Activated B cell treated with CpG ODN at 0.5 μM for 24 hours (primary cell): ENCODE measurements at regions of chr7 and their contacts with region 1.

Region 1: DNA sequence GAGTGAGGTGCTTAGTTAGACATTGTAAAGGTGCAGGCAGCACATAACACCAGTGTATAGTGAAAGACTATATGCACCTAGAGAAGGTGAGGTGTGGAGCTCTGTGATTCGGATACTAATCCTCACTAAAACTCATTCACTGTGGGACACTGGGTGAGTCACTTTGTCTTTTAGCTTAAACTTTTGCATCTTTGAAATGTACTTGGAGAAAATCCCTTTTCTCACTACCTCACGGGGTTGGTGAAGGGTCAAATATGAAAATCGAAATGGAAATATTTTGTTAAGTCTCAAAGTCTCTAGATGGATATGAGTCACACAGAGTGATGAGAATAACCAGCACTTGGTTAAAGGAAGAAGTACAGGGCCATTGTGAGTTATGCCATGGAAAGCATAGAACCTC is 38.0 kb downstream of the MDFIC start:
- DNase-seq: no peak
- ATAC-seq: peak; percentile 68
- H3K4me3 Mint-ChIP-seq: no peak overlapping the region
- H3K27ac Mint-ChIP-seq: peak overlapping the region; percentile 70
- H3K4me1 Mint-ChIP-seq: peaks cover 63% of the 10 kb centered on the region
- H3K27me3 Mint-ChIP-seq: no peaks in the 10 kb centered on the region
- CTCF ChIP-seq: no peak

Region 2: GRCh38 chr7:114916261-114916892 is 43.6 kb before region 1 on chr7:
- CTCF ChIA-PET with region 1: no interaction called
- POLR2A ChIA-PET with region 1: interaction called, 3 read pairs
- intact Hi-C with region 1: loop called (anchors 1 kb)
- DNase-seq: no peak
- ATAC-seq: peak; percentile 92
- H3K4me3 Mint-ChIP-seq: peak overlapping the region; percentile 75
- H3K27ac Mint-ChIP-seq: peak overlapping the region; percentile 91
- H3K4me1 Mint-ChIP-seq: peaks cover 59% of the 10 kb centered on the region
- H3K27me3 Mint-ChIP-seq: no peaks in the 10 kb centered on the region
- CTCF ChIP-seq: no peak

Region 3: GRCh38 chr7:114944745-114945625 is 14.9 kb before region 1 on chr7:
- CTCF ChIA-PET with region 1: interaction called, 4 read pairs
- POLR2A ChIA-PET with region 1: interaction called, 4 read pairs
- intact Hi-C with region 1: loop called (anchors 2 kb)
- DNase-seq: no peak
- ATAC-seq: no peak
- H3K4me3 Mint-ChIP-seq: no peak overlapping the region
- H3K27ac Mint-ChIP-seq: peak overlapping the region; percentile 35
- H3K4me1 Mint-ChIP-seq: peaks cover 78% of the 10 kb centered on the region
- H3K27me3 Mint-ChIP-seq: no peaks in the 10 kb centered on the region
- CTCF ChIP-seq: no peak

Region 4: GRCh38 chr7:114979388-114979787 is 19.5 kb after region 1 on chr7:
- CTCF ChIA-PET with region 1: interaction called, 3 read pairs
- POLR2A ChIA-PET with region 1: no interaction called
- intact Hi-C with region 1: loop called (anchors 2 kb)
- DNase-seq: no peak
- ATAC-seq: no peak
- H3K4me3 Mint-ChIP-seq: no peak overlapping the region
- H3K27ac Mint-ChIP-seq: no peak overlapping the region
- H3K4me1 Mint-ChIP-seq: peaks cover 69% of the 10 kb centered on the region
- H3K27me3 Mint-ChIP-seq: no peaks in the 10 kb centered on the region
- CTCF ChIP-seq: no peak